Activated CD4-positive, alpha-beta memory T cell treated with anti-CD3 and anti-CD28 coated beads for 36 hours (primary cell): ENCODE measurements at regions of chr12 and their contacts with region 1.

Region 1: DNA sequence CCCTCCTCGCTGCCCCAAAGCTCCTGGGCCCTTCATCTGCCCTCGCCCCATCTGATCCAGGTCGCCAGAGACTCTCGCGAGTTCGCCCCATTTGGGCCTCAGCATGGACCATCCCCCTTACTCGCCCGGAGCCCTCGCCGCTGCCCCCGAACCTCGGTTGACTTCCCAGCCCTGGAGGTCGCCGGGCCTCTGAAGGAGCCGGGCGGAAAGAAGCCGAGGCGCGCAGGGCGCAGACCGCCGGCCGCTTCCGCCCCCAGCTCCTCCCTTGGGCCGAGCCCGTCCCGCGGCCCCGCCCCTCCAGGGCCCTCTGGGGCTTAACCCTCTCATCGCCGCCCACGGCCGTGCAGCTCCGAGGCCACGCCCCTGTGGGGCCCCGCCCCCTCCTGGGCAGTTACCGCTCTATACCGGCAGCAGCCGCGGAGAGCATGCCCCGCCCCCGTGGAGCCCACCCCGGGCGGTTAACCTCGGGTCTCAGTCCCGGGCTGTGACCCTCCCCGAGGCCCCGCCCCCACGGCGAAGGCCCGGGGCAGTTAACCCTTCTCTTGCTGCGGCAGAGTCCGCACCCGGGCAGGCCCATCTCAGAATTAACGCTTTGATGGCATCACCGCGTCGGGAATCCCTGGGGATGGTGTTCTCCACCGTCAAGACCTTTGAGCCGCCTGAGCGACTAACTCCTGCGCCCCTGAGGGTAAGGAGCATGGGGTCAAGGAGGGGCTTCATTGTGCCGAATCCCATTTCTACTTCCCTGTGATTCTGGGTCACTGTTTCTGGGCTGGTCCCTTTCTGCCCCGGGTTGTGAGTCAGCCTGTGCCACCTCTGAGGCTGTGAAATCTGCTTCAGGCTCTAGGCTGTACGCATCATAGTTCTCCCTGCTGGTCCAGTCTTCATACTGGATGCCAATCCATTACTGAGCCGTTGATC is at the start of gene SPSB2:
- DNase-seq: peak; percentile 99
- H3K4me3 Mint-ChIP-seq: peak within 1 kb of the TSS; percentile 87
- H3K27ac Mint-ChIP-seq: peak within 1 kb of the TSS; percentile 89
- H3K4me1 Mint-ChIP-seq: peaks cover 51% of the 10 kb centered on the region
- H3K27me3 Mint-ChIP-seq: no peaks in the 10 kb centered on the region
- total RNA-seq, gene SPSB2: 3.8 to 4.7 TPM

Region 2: DNA sequence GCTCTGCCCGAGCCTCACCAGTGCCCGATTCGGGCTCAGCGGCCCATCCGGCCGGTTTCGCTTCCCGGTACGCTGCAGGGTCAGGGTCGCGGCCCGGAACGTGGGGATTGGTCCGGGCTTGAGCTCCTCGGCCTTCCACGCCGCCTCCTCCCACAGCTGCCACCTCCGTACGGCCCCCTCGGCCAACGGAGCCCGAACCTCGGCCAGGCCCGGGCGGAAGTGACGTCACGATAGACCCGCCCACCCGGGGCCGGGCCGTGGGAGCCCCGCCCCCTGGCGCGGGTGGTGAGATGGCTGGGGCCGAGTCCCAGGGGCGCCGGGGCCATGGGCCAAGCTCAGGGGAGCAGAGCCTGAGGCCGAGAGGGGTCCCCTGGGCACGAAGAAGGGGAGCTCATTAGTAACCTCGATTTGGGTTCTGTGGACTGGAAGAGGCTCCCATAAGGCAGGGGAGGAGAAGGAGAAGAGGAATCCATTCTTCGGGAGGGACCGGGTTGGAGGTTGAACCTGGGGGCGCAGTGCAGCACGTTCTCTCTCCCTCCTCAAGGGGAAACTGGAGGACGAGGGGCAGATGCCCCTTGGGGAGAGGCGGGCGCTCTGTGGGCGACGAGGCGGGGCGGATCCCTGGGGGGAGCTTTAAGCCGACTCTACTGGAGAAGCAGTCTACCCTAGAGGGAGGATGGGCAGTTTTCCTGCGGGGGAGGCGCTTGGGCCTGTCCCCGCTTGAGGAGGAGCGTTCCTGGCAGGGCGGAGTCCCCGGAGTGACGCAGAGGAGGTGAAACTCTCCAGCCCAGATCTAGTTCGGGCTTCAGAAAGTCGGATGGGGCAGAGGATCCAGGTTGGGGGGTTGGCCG is 120.2 kb before region 1 on chr12 and contains the start of gene MLF2:
- CTCF ChIA-PET with region 1: interaction called, 19 read pairs
- POLR2A ChIA-PET with region 1: interaction called, 7 read pairs
- intact Hi-C with region 1: no loop called
- DNase-seq: peak; percentile 99
- H3K4me3 Mint-ChIP-seq: peak within 1 kb of the TSS; percentile 93
- H3K27ac Mint-ChIP-seq: peak within 1 kb of the TSS; percentile 96
- H3K4me1 Mint-ChIP-seq: peaks cover 24% of the 10 kb centered on the region
- H3K27me3 Mint-ChIP-seq: no peaks in the 10 kb centered on the region
- total RNA-seq, gene MLF2: 140 to 141 TPM

Region 3: DNA sequence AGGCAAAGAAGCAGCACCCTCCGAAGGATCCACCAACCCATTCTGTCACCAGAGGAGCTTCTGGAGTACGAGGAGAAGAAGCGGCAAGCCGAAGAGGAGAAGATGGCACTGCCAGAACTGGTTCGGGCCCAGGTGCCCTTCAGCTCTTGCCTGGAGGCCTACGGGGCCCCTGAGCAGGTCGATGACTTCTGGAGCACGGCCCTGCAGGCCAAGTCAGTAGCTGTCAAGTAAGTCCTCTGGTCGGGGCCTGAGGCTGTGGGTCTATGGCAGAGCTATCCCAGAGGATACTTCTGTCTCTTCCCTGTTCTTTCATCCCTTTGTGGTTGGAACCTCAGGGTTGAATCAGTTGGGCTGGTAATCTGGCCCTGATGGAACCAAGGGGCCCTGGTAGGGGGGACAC is 12.0 kb before region 1 on chr12:
- CTCF ChIA-PET with region 1: interaction called, 74 read pairs
- POLR2A ChIA-PET with region 1: interaction called, 8 read pairs
- intact Hi-C with region 1: no loop called
- DNase-seq: no peak
- H3K4me3 Mint-ChIP-seq: no peak overlapping the region
- H3K27ac Mint-ChIP-seq: no peak overlapping the region
- H3K4me1 Mint-ChIP-seq: peaks cover under 1% of the 10 kb centered on the region
- H3K27me3 Mint-ChIP-seq: no peaks in the 10 kb centered on the region

Region 4: GRCh38 chr12:6914246-6914946 is 41.0 kb after region 1 on chr12 and contains the start of gene ENO2:
- CTCF ChIA-PET with region 1: interaction called, 12 read pairs
- POLR2A ChIA-PET with region 1: interaction called, 8 read pairs
- intact Hi-C with region 1: loop called (anchors 1 kb)
- DNase-seq: peak; percentile 88
- H3K4me3 Mint-ChIP-seq: peak within 1 kb of the TSS; percentile 92
- H3K27ac Mint-ChIP-seq: peak within 1 kb of the TSS; percentile 88
- H3K4me1 Mint-ChIP-seq: peaks cover 30% of the 10 kb centered on the region
- H3K27me3 Mint-ChIP-seq: no peaks in the 10 kb centered on the region
- total RNA-seq, gene ENO2: 185 to 193 TPM

Region 5: DNA sequence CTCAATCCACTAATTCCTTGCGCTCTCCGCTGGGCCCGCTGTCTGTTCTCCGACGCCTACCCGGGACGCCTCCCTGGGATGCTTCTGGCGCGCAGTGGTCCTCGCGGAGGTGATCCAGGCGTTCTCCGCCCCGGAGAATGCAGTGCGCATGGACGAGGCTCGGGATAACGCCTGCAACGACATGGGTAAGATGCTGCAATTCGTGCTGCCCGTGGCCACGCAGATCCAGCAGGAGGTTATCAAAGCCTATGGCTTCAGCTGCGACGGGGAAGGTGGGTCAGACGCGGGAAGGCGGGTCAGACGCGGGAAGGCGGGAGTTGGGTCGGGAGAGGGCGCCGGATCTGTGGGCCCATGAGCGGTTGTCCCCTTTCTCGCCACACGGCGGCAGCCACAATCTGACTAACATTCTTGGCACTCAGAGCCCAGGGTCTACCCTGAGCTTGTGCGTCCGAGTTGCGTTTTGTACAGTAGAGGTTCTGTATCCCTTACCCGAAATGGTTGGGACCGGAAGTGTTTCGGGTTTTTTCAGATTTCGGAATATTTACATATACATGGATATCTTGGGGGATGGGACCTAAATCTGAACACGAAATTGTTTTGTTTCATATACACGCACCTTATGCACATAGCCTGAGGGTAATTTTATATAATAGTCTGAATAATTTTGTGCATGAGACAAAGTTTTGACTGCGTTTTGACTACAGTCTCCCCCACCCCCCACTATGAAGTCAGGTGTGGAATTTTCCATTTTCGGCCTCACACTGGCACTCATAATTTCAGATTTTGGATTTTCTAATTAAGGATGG is 71.2 kb after region 1 on chr12:
- CTCF ChIA-PET with region 1: interaction called, 18 read pairs
- POLR2A ChIA-PET with region 1: interaction called, 18 read pairs
- intact Hi-C with region 1: no loop called
- DNase-seq: peak; percentile 95
- H3K4me3 Mint-ChIP-seq: peak overlapping the region; percentile 90
- H3K27ac Mint-ChIP-seq: peak overlapping the region; percentile 100
- H3K4me1 Mint-ChIP-seq: peaks cover 56% of the 10 kb centered on the region
- H3K27me3 Mint-ChIP-seq: peaks cover 6% of the 10 kb centered on the region

Region 6: DNA sequence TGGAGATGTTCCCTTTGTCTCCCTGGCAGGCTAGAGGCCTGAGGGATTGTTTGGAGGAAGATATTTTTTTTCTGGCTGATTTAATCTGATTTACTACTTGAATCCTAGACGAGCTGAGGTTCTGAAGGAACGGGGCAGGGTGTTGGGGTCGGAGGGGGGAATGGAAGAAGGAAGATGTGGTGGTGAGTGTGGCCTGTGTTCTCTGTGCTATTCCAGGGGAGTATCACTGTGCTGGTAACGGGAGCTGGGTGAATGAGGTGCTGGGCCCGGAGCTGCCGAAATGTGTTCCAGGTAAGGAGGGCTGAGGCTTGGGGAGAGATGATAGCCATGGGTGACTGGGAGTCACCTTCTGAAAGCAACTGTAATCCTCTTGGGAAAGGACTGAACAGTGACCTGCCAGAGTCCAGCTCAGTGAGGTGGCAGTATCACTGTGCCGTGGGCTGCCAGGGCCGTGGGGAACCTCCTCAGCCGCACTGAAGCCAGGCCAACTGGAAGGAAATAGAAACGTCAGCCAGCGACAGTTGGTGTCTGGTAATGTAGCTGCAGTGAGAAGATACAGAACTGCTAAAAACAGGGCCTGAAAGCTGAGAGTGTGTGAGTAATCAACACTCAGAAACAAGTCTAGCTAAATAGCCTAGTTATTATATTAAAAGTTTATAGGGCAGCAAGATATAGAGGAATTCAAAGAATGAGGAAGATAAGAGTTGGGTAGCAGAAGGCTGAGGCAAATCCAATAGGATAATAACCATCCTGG is 195.1 kb after region 1 on chr12:
- CTCF ChIA-PET with region 1: no interaction called
- POLR2A ChIA-PET with region 1: no interaction called
- intact Hi-C with region 1: no loop called
- DNase-seq: no peak
- H3K4me3 Mint-ChIP-seq: no peak overlapping the region
- H3K27ac Mint-ChIP-seq: no peak overlapping the region
- H3K4me1 Mint-ChIP-seq: no peaks in the 10 kb centered on the region
- H3K27me3 Mint-ChIP-seq: no peaks in the 10 kb centered on the region

Region 7: GRCh38 chr12:7092229-7092985 is 219.1 kb after region 1 on chr12 and contains the start of gene C1R:
- CTCF ChIA-PET with region 1: interaction called, 3 read pairs
- POLR2A ChIA-PET with region 1: no interaction called
- intact Hi-C with region 1: loop called (anchors 5 kb)
- DNase-seq: peak; percentile 79
- H3K4me3 Mint-ChIP-seq: peak within 1 kb of the TSS; percentile 76
- H3K27ac Mint-ChIP-seq: no peak within 1 kb of the TSS
- H3K4me1 Mint-ChIP-seq: peaks cover 7% of the 10 kb centered on the region
- H3K27me3 Mint-ChIP-seq: no peaks in the 10 kb centered on the region
- total RNA-seq, gene C1R: 1.4 to 2.2 TPM